CD14-positive monocyte (primary cell): ENCODE measurements at regions of chr1 and their contacts with region 1.

Region 1: GRCh38 chr1:169601093-169601881 is 15.0 kb upstream of the F5 start:
- DNase-seq: peak; percentile 25 to 62 (median 53)
- H3K4me3 ChIP-seq: no peak overlapping the region
- H3K4me3 Mint-ChIP-seq: no peak overlapping the region
- H3K27ac ChIP-seq: peak overlapping the region in 1 of 2 donors; percentile 15
- H3K27ac Mint-ChIP-seq: peak overlapping the region in 5 of 7 donors; percentile 33 to 89 (median 55)
- H3K4me1 ChIP-seq: peaks cover 47 to 52% of the 10 kb centered on the region in 2 donors
- H3K4me1 Mint-ChIP-seq: peaks cover 49% of the 10 kb centered on the region
- H3K27me3 ChIP-seq: no peaks in the 10 kb centered on the region
- H3K27me3 Mint-ChIP-seq: peaks cover 0 to 2% (median 0%) of the 10 kb centered on the region in 3 donors
- CTCF ChIP-seq: peak; percentile 77

Region 2: GRCh38 chr1:169680377-169681019 is 79.2 kb after region 1 on chr1:
- intact Hi-C with region 1: no loop called
- DNase-seq: no peak
- H3K4me3 ChIP-seq: no peak overlapping the region
- H3K4me3 Mint-ChIP-seq: no peak overlapping the region
- H3K27ac ChIP-seq: no peak overlapping the region
- H3K27ac Mint-ChIP-seq: no peak overlapping the region
- H3K4me1 ChIP-seq: peaks cover 18 to 24% of the 10 kb centered on the region in 2 donors
- H3K4me1 Mint-ChIP-seq: peaks cover 24% of the 10 kb centered on the region
- H3K27me3 ChIP-seq: no peaks in the 10 kb centered on the region
- H3K27me3 Mint-ChIP-seq: peaks cover 0 to 2% (median 0%) of the 10 kb centered on the region in 3 donors
- CTCF ChIP-seq: no peak

Region 3: GRCh38 chr1:169694304-169695075 is 93.2 kb after region 1 on chr1:
- intact Hi-C with region 1: loop called in 1 of 2 experiments (anchors 5 kb)
- DNase-seq: peak in 1 of 3 donors; percentile 16
- H3K4me3 ChIP-seq: peak overlapping the region in 1 of 3 experiments; percentile 24
- H3K4me3 Mint-ChIP-seq: peak overlapping the region; percentile 2 to 62
- H3K27ac ChIP-seq: peak overlapping the region in 1 of 2 donors; percentile 89
- H3K27ac Mint-ChIP-seq: peak overlapping the region; percentile 72 to 95 (median 88)
- H3K4me1 ChIP-seq: peaks cover 85 to 86% of the 10 kb centered on the region in 2 donors
- H3K4me1 Mint-ChIP-seq: peaks cover 90% of the 10 kb centered on the region
- H3K27me3 ChIP-seq: no peaks in the 10 kb centered on the region
- H3K27me3 Mint-ChIP-seq: no peaks in the 10 kb centered on the region
- CTCF ChIP-seq: no peak

Region 4: DNA sequence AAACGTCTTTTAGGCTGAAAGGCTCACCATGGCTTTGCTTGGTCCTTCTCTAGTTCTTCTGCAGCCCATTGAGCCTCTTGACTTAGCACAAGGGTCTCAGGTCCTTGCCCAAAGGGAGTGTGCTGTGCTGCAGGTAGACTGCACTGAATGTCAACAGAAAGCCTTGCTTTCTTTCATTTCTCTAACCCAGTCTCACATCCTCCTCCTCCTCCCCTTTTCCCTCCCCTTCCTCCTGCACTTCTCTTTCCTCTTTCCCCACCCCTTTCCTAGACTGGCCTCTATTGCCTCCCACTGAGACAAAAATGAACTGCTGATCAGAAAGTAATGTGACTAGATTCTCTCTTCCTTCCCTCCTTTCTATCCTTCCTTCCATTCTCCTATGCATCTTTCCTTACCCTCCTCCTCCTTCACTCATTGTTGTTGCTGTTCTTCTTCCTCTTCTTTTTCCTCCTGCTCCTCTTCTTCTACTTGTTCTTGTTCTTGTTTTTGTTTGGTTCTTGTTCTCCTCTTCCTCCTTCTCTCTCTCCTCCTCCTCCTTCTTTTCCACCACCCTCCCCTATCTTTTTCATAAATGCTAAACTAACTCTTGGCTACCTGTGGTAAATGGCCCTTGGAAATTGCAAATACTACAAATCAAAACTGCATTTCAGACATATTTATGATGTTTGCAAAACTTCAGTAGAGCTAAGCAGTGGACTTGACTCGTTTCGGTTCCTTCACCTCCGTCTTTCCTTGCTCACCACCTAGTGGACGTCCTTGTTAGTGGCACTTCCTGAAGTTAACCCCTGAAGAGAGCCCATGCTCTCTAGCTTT is 110.4 kb after region 1 on chr1 and contains the start of gene SELL:
- intact Hi-C with region 1: loop called (anchors 2 to 5 kb)
- DNase-seq: peak; percentile 75 to 81 (median 80)
- H3K4me3 ChIP-seq: peak within 1 kb of the TSS; percentile 45 to 97 (median 75)
- H3K4me3 Mint-ChIP-seq: peak within 1 kb of the TSS; percentile 84 to 95
- H3K27ac ChIP-seq: peak within 1 kb of the TSS in 1 of 2 donors; percentile 81
- H3K27ac Mint-ChIP-seq: peak within 1 kb of the TSS; percentile 85 to 97 (median 91)
- H3K4me1 ChIP-seq: peaks cover 24 to 56% of the 10 kb centered on the region in 2 donors
- H3K4me1 Mint-ChIP-seq: peaks cover 37% of the 10 kb centered on the region
- H3K27me3 ChIP-seq: no peaks in the 10 kb centered on the region
- H3K27me3 Mint-ChIP-seq: peaks cover 1 to 3% (median 2%) of the 10 kb centered on the region in 3 donors
- CTCF ChIP-seq: peak; percentile 84
- polyA plus RNA-seq, gene SELL: 153 to 1,885 (median 1,118) TPM

Region 5: GRCh38 chr1:169794530-169795416 is 193.5 kb after region 1 on chr1 and contains the start of gene METTL18:
- intact Hi-C with region 1: loop called in 1 of 2 experiments (anchors 10 kb)
- DNase-seq: peak; percentile 76 to 86 (median 78)
- H3K4me3 ChIP-seq: peak within 1 kb of the TSS; percentile 68 to 93 (median 90)
- H3K4me3 Mint-ChIP-seq: peak within 1 kb of the TSS; percentile 98 to 99
- H3K27ac ChIP-seq: peak within 1 kb of the TSS; percentile 69 to 89
- H3K27ac Mint-ChIP-seq: peak within 1 kb of the TSS; percentile 95 to 100 (median 99)
- H3K4me1 ChIP-seq: peaks cover 14 to 15% of the 10 kb centered on the region in 2 donors
- H3K4me1 Mint-ChIP-seq: peaks cover 26% of the 10 kb centered on the region
- H3K27me3 ChIP-seq: no peaks in the 10 kb centered on the region
- H3K27me3 Mint-ChIP-seq: peaks cover 0 to 5% (median 2%) of the 10 kb centered on the region in 3 donors
- CTCF ChIP-seq: no peak
- polyA plus RNA-seq, gene METTL18: 0.68 to 2.5 (median 2.3) TPM